ENCODE measurements at regions of chr5 and their contacts with region 1.

Region 1: GRCh38 chr5:124604419-124604818 is 142.0 kb downstream of the ZNF608 start:
- DNase-seq: no peak
- CTCF ChIP-seq: no peak

Region 2: GRCh38 chr5:124583469-124584350 is 20.7 kb before region 1 on chr5:
- CTCF ChIA-PET with region 1: interaction called, 10 read pairs
- POLR2A ChIA-PET with region 1: no interaction called
- DNase-seq: peak; percentile 72
- CTCF ChIP-seq: no peak

Region 3: GRCh38 chr5:124628721-124629596 is 24.5 kb after region 1 on chr5:
- CTCF ChIA-PET with region 1: no interaction called
- POLR2A ChIA-PET with region 1: no interaction called
- DNase-seq: no peak
- CTCF ChIP-seq: no peak

Measured in GM10248 (cell line).